CD4-positive, alpha-beta T cell (primary cell): ENCODE measurements at regions of chr20 and their contacts with region 1.

Region 1: DNA sequence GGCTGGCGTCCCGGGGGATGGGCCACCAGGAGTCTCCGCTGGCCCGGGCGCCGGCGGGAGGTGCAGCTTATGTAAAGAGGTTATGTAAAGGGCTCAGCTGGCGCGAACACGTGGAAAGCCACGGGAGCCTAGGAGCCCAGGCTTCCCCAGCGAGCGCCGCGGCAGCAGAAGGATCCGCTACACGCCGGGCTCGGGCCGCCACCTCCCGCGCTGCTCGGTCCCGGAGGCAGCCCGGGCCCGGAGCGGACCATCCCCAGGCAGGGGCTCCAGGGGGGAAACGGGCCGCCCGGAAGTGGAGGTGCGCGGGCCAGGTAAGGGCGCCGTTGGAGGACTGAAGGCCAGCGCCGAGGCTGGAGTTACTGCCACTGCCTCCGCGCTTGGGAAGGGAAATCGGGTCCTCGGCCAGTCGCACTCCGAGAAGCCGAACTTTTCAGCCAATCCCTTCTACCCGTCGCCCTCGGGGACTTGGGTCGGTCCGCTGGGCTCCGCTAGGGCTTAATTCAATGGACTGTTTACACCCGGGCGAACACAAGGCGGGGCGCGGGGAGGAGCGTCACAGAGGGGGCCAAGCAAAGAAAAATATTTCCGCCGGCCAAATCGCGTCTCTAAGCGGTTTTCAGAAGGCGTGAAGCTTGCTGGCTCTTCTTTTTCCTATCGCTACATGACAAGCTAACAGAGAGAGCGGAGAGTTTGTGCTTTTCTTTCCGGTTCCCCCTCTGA is 398 bp downstream of the STK35 start:
- DNase-seq: peak; percentile 84 to 95 (median 87)
- ATAC-seq: peak; percentile 75
- H3K4me3 ChIP-seq: peak overlapping the region; percentile 89
- H3K4me3 Mint-ChIP-seq: peak overlapping the region; percentile 99
- H3K27ac ChIP-seq: peak overlapping the region; percentile 96 to 99
- H3K27ac Mint-ChIP-seq: peak overlapping the region; percentile 100
- H3K4me1 ChIP-seq: peaks cover 37% of the 10 kb centered on the region
- H3K4me1 Mint-ChIP-seq: peaks cover 48% of the 10 kb centered on the region
- H3K27me3 ChIP-seq: no peaks in the 10 kb centered on the region
- H3K27me3 Mint-ChIP-seq: peaks cover 4% of the 10 kb centered on the region
- CTCF ChIP-seq: no peak

Region 2: DNA sequence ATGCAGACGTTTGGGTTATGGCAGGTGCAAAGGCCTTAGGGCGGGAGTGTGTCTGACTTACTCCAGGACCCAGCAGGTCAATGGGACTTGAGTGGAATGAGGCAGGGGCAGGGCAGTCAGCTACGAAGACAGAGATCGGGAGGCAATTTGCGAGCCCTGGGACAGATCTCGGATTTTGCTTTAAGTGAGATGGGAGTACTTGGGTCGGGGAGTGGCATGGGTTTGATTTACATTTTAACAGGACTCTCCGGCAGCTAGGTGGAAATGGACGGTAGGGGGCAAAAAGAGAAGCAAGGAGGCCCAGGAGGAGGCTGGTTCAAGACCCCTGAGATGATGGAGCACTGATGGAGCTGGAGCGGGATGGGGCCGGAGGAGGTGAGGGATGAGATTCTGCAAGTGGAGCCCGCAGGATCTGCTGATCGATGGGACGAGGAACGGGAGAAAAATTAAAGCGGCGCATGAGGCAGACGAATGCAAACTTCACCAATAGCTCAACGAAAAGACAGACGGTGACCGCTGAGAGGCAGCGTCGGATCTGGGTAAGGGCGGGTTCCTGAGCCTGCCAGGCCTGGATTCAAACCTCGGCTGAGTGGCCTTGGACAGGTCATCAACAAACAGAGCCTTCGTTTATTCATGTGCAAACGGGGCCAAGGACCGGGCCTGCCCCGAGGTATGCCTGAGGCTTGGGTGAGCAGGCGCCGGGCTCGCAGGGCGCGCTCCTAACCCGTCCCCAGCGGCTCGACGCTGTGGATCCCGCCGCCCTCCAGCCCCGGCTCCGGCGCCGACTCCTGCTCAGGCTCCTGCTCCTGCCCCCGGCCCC is 1694.7 kb before region 1 on chr20:
- CTCF ChIA-PET with region 1: no interaction called
- POLR2A ChIA-PET with region 1: no interaction called
- intact Hi-C with region 1: loop called in 1 of 2 experiments (anchors 5 kb)
- DNase-seq: peak; percentile 13 to 88 (median 62)
- ATAC-seq: peak; percentile 73
- H3K4me3 ChIP-seq: peak overlapping the region; percentile 97
- H3K4me3 Mint-ChIP-seq: peak overlapping the region; percentile 95
- H3K27ac ChIP-seq: peak overlapping the region; percentile 40 to 45
- H3K27ac Mint-ChIP-seq: peak overlapping the region; percentile 88
- H3K4me1 ChIP-seq: peaks cover 36% of the 10 kb centered on the region
- H3K4me1 Mint-ChIP-seq: peaks cover 51% of the 10 kb centered on the region
- H3K27me3 ChIP-seq: no peaks in the 10 kb centered on the region
- H3K27me3 Mint-ChIP-seq: no peaks in the 10 kb centered on the region
- CTCF ChIP-seq: peak; percentile 37

Region 3: GRCh38 chr20:1225783-1226654 is 876.0 kb before region 1 on chr20 and contains the start of gene RAD21L1:
- CTCF ChIA-PET with region 1: no interaction called
- POLR2A ChIA-PET with region 1: no interaction called
- intact Hi-C with region 1: loop called in 1 of 2 experiments (anchors 10 kb)
- DNase-seq: peak; percentile 73 to 92 (median 80)
- ATAC-seq: peak; percentile 80
- H3K4me3 ChIP-seq: peak within 1 kb of the TSS; percentile 77
- H3K4me3 Mint-ChIP-seq: peak within 1 kb of the TSS; percentile 92
- H3K27ac ChIP-seq: peak within 1 kb of the TSS in 1 of 2 donors; percentile 22
- H3K27ac Mint-ChIP-seq: peak within 1 kb of the TSS; percentile 53
- H3K4me1 ChIP-seq: peaks cover 18% of the 10 kb centered on the region
- H3K4me1 Mint-ChIP-seq: peaks cover 19% of the 10 kb centered on the region
- H3K27me3 ChIP-seq: peaks cover 0 to 15% of the 10 kb centered on the region in 2 experiments
- H3K27me3 Mint-ChIP-seq: peaks cover 21% of the 10 kb centered on the region
- CTCF ChIP-seq: no peak
- total RNA-seq, gene RAD21L1: 0.58 TPM in 1 of 2 experiments, not detected in the other

Region 4: DNA sequence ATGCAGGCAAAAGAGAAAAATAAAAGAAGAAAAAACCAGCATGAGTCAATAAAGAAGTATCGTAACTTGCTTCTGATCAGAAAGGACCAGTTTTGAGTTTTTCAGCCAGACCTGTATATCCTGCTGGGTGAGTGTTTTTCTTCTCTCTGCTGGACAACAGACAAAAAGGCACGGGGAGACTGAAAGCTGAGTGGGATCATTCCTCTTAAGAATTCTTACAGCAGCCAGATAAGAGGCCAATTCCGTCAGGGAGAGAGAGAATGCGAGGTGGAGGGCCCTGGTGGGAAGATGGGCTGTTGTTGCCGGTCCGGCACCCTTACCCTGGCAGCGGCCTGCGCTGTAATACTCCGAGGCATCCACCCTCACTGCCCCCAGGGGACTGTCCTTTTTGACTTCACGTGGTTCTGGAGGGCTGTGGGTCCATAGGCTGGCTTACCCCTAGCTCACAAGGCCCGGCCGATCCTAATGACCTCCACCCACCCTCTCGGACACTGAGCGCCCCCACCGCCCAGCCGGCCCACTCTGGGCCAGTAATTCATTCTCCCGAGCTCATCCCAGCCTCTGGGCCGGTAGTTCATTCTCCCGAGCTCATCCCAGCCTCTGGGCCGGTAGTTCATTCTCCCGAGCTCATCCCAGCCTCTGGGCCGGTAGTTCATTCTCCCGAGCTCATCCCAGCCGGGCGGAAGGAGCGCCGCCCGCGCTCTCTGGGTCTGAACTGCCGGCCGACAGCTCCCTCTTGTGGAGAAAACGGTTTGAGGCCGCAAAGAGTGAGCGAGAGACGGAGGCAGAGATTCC is 325.1 kb before region 1 on chr20:
- CTCF ChIA-PET with region 1: no interaction called
- POLR2A ChIA-PET with region 1: no interaction called
- intact Hi-C with region 1: loop called in 1 of 2 experiments (anchors 10 kb)
- DNase-seq: peak; percentile 70 to 90 (median 81)
- ATAC-seq: peak; percentile 93
- H3K4me3 ChIP-seq: peak overlapping the region; percentile 66
- H3K4me3 Mint-ChIP-seq: peak overlapping the region; percentile 81
- H3K27ac ChIP-seq: no peak overlapping the region
- H3K27ac Mint-ChIP-seq: no peak overlapping the region
- H3K4me1 ChIP-seq: peaks cover 9% of the 10 kb centered on the region
- H3K4me1 Mint-ChIP-seq: peaks cover 16% of the 10 kb centered on the region
- H3K27me3 ChIP-seq: peaks cover 0 to 11% of the 10 kb centered on the region in 2 experiments
- H3K27me3 Mint-ChIP-seq: peaks cover 17% of the 10 kb centered on the region
- CTCF ChIP-seq: peak; percentile 77

Region 5: GRCh38 chr20:2451939-2452732 is 350.1 kb after region 1 on chr20:
- CTCF ChIA-PET with region 1: no interaction called
- POLR2A ChIA-PET with region 1: no interaction called
- intact Hi-C with region 1: loop called in 1 of 2 experiments (anchors 5 kb)
- DNase-seq: peak; percentile 38 to 75 (median 55)
- ATAC-seq: peak; percentile 76
- H3K4me3 ChIP-seq: no peak overlapping the region
- H3K4me3 Mint-ChIP-seq: no peak overlapping the region
- H3K27ac ChIP-seq: no peak overlapping the region
- H3K27ac Mint-ChIP-seq: no peak overlapping the region
- H3K4me1 ChIP-seq: peaks cover 2% of the 10 kb centered on the region
- H3K4me1 Mint-ChIP-seq: peaks cover 6% of the 10 kb centered on the region
- H3K27me3 ChIP-seq: no peaks in the 10 kb centered on the region
- H3K27me3 Mint-ChIP-seq: no peaks in the 10 kb centered on the region
- CTCF ChIP-seq: peak; percentile 66

Region 6: DNA sequence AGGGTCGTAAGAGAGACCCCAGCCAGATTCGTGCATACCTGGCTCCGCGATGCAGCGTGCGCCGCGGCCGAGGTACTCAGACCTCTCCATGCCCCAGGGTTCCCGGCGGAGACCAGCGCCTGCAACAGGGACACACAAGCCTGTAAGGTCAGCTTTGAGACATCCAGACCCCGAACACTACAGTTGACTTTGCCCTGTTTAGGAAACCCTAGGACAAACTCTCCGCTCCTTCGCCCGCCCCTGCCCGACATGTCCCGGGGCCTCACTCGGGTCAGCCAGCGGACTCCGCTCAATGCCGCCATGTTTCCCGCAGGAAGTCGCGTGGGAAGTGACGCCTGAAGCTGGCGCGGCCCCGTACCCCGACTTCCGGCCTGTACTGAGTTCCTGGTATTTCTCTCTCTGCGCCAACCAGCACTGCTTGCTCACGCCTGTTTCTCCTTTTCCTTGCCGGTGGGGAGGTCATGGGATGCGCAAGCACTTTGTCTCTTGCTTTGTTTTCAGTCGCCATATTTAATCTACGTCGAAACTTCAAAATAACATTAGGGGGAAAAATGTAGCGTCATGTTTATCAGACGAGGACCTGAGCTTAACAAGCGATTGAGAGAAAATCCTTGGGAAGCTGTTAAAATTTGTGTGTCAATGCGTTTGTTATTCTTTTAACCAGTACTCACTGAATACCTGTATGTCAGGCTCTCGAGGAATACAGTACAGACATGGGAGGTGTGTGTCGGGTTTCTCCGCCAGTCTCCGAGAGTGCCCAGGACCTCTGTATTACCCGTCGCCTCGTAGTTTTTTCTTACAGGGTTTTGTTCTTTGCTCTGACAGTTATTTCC is 562.1 kb after region 1 on chr20 and contains the start of gene IDH3B:
- CTCF ChIA-PET with region 1: no interaction called
- POLR2A ChIA-PET with region 1: no interaction called
- intact Hi-C with region 1: loop called in 1 of 2 experiments (anchors 5 kb)
- DNase-seq: peak; percentile 83 to 96 (median 89)
- ATAC-seq: peak; percentile 99
- H3K4me3 ChIP-seq: peak within 1 kb of the TSS; percentile 90
- H3K4me3 Mint-ChIP-seq: peak within 1 kb of the TSS; percentile 94
- H3K27ac ChIP-seq: peak within 1 kb of the TSS; percentile 77 to 96
- H3K27ac Mint-ChIP-seq: peak within 1 kb of the TSS; percentile 91
- H3K4me1 ChIP-seq: peaks cover 18% of the 10 kb centered on the region
- H3K4me1 Mint-ChIP-seq: peaks cover 28% of the 10 kb centered on the region
- H3K27me3 ChIP-seq: no peaks in the 10 kb centered on the region
- H3K27me3 Mint-ChIP-seq: no peaks in the 10 kb centered on the region
- CTCF ChIP-seq: no peak
- total RNA-seq, gene IDH3B: 171 to 181 TPM